CD4-positive, alpha-beta memory T cell (primary cell): ENCODE measurements at regions of chr11 and their contacts with region 1.

Region 1: GRCh38 chr11:121534131-121535093 is 81.6 kb upstream of the SORL1-AS1 start:
- DNase-seq: no peak
- H3K4me3 ChIP-seq: no peak overlapping the region
- H3K4me3 Mint-ChIP-seq: no peak overlapping the region
- H3K27ac ChIP-seq: peak overlapping the region; percentile 7
- H3K27ac Mint-ChIP-seq: peak overlapping the region in 4 of 7 donors; percentile 2 to 80 (median 71)
- H3K4me1 ChIP-seq: peaks cover 16% of the 10 kb centered on the region
- H3K4me1 Mint-ChIP-seq: peaks cover 23 to 51% (median 40%) of the 10 kb centered on the region in 4 donors
- H3K27me3 ChIP-seq: no peaks in the 10 kb centered on the region
- H3K27me3 Mint-ChIP-seq: no peaks in the 10 kb centered on the region

Region 2: DNA sequence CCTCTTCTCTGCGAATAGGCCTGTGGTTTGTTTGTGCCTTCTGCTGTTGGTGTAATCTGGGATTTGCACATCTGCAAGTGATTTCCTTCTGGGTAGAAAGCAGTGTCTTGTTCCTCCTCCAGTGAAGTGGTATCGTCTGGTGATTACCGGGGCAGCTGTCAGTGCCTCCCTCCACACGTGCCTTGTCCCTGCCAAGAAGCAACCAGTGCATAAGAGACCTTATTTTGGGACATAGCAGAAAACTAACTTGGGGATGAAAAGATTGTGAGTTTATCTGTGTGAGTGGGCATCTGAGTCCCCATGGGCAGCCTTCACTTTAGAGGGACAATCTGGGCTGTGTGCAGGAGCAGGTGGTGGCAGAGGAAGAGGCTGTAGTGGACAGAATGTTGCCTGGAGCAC is 10.2 kb before region 1 on chr11:
- CTCF ChIA-PET with region 1: interaction called, 3 read pairs
- POLR2A ChIA-PET with region 1: interaction called, 3 read pairs
- intact Hi-C with region 1: loop called (anchors 2 kb)
- DNase-seq: no peak
- H3K4me3 ChIP-seq: no peak overlapping the region
- H3K4me3 Mint-ChIP-seq: no peak overlapping the region
- H3K27ac ChIP-seq: no peak overlapping the region
- H3K27ac Mint-ChIP-seq: peak overlapping the region in 2 of 7 donors; percentile 57 to 71
- H3K4me1 ChIP-seq: no peaks in the 10 kb centered on the region
- H3K4me1 Mint-ChIP-seq: peaks cover 24 to 48% (median 29%) of the 10 kb centered on the region in 4 donors
- H3K27me3 ChIP-seq: no peaks in the 10 kb centered on the region
- H3K27me3 Mint-ChIP-seq: no peaks in the 10 kb centered on the region

Region 3: DNA sequence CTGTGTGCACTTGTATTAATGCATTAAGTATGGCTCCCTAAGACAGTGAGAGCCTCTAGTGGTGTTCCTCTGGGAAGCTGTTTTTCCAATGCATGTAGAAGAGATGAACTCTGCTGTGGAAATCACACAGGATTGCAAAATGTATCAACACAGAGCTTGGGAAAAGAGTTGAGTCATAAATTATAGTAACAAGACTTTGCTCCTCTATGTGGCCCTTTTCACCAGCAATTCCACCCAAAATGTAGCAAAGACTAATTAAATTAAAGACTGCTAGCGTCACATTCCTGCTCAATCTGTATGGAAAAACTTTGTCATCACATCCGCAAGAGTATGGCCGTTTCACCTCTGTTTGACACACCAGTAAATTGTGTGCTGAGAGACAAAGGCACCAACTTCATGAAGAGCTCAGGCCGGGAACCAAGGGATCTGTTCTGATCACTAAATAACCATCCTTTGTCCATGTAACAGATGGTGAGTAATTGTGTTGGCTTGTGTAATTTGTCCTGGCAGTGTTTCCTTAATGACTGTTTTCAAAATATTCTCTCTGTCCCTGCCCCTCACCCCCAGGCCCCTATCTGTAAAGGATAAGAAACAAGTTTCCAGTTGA is 127.6 kb after region 1 on chr11:
- CTCF ChIA-PET with region 1: no interaction called
- POLR2A ChIA-PET with region 1: no interaction called
- intact Hi-C with region 1: no loop called
- DNase-seq: no peak
- H3K4me3 ChIP-seq: no peak overlapping the region
- H3K4me3 Mint-ChIP-seq: no peak overlapping the region
- H3K27ac ChIP-seq: no peak overlapping the region
- H3K27ac Mint-ChIP-seq: peak overlapping the region in 1 of 7 donors; percentile 59
- H3K4me1 ChIP-seq: no peaks in the 10 kb centered on the region
- H3K4me1 Mint-ChIP-seq: no peaks in the 10 kb centered on the region
- H3K27me3 ChIP-seq: no peaks in the 10 kb centered on the region
- H3K27me3 Mint-ChIP-seq: no peaks in the 10 kb centered on the region